A673 (cell line): ENCODE measurements at regions of chr12 and their contacts with region 1.

Region 1: DNA sequence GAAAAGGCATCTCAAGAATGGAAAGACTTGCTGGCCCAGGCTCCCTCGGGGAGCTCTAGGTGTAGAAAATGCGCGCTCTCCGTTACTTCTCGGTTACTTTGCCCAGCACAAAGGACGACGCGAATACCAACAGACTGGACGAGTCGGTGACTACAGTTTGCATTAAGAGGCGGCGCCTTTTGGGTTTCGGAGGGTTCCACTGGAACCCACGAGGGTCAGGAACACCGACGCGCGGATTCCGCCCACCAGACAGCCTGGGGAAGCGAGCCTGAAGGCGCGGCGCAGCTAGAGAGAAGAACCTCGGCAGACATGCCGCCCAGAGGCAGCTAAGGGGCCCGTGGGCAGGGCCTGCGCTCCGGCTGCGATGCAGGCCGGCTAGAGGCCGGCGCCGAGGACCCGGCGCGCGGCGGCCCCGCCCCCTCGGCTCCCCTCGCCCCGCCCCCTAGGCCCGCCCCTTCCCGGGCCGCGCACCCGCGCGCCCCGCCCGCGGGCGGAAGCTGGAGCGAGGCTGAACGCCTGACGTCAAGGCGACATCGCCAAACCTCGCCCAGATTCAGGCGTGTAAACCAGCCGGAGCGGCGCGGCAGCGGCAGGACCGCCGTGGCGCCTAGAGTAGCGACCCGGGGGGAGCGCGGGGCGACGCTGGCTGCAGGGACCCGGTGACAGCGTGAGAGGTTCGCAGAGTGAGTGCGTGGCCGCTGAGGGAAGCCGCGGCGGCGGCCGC is at the start of gene RAP1B:
- DNase-seq: peak; percentile 94
- H3K4me3 ChIP-seq: peak within 1 kb of the TSS; percentile 91
- H3K27ac ChIP-seq: peak within 1 kb of the TSS; percentile 94
- H3K4me1 ChIP-seq: peaks cover 23% of the 10 kb centered on the region
- H3K27me3 ChIP-seq: no peaks in the 10 kb centered on the region
- CTCF ChIP-seq: no peak
- total RNA-seq, gene RAP1B: 134 and 148 TPM in 2 replicates

Region 2: DNA sequence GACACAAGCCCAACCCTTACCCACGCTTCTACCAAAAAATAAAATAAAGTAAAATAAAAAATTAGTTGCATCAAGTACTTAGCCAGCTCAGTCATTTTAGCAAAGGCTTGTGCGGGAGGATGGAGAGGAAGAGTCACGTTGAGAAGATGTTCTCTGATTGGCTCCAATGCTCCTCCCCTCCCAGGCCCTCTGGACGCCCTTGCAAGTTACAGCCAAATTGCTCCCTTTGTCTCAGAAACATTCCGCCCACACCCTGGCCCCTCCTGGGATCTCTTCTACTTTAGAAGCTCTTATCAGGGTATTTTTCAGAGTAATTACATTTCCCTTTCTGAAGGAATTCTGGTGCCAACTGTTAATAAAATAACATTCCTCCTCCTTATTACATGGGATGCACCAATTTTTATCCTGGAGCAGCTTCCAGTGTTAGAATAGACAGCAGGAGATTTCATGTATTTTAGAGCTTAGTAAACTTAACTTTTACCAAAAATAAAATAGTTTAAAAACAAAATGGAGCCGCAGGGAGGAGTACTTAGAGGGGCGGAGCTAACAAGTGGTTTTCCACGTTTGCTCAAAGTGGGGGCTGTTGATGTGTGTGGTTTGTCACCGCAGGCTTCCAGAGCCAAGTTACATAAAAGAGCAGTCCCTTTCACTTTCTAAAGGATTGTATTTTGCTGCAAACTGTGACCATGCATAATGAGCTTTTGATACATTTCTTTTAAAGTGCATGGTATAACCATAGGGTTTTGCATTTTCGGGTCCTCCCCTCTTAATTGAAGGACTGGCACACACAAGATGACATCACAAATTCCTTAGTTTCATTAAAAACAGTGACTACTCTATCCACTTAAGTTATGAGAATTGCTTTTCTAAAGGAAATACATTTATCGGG is 71.6 kb before region 1 on chr12:
- CTCF ChIA-PET with region 1: no interaction called
- POLR2A ChIA-PET with region 1: interaction called, 5 read pairs
- intact Hi-C with region 1: loop called (anchors 5 kb)
- DNase-seq: peak; percentile 94
- H3K4me3 ChIP-seq: peak overlapping the region; percentile 31
- H3K27ac ChIP-seq: peak overlapping the region; percentile 73
- H3K4me1 ChIP-seq: peaks cover 19% of the 10 kb centered on the region
- H3K27me3 ChIP-seq: no peaks in the 10 kb centered on the region
- CTCF ChIP-seq: no peak

Region 3: GRCh38 chr12:68675101-68675842 is 64.7 kb after region 1 on chr12:
- CTCF ChIA-PET with region 1: no interaction called
- POLR2A ChIA-PET with region 1: no interaction called
- intact Hi-C with region 1: loop called (anchors 5 kb)
- DNase-seq: peak; percentile 47
- H3K4me3 ChIP-seq: no peak overlapping the region
- H3K27ac ChIP-seq: no peak overlapping the region
- H3K4me1 ChIP-seq: peaks cover 11% of the 10 kb centered on the region
- H3K27me3 ChIP-seq: no peaks in the 10 kb centered on the region
- CTCF ChIP-seq: no peak